ENCODE measurements at regions of chr11 and their contacts with region 1.

Region 1: DNA sequence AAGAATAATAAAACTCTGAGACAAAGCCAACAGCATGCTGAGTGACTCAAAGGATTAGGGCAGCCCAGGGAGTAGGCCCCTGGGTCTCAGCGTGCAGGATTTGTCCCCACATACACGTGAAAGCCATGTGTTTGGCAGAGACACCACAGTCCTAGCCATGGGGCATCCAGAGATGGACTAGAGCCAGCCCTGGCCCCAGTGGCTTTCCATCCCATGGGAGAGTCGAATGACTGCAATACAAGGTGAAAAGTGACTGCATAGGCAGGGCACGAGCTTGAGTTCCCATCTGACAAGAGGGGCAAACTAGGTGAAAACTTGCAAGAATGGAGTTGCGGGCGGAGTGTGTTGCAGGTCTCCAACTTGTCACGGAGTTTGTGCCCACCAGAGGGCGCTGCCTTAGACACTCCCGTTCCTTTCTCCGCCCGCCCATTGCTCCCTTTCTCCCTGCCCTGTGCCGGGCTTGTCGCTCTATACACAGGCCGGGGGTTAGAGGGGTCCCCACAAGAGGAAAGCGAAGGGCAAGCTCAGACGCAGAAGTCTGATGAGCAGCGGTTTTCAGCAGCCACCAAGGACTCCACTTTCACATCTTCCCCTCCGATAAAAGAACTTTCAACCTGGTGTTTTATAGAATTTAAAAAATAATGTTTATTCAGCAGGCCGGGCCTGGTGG is 24.2 kb downstream of the TSKU start:
- DNase-seq: peak; percentile 92
- ATAC-seq: peak; percentile 65 to 83

Region 2: DNA sequence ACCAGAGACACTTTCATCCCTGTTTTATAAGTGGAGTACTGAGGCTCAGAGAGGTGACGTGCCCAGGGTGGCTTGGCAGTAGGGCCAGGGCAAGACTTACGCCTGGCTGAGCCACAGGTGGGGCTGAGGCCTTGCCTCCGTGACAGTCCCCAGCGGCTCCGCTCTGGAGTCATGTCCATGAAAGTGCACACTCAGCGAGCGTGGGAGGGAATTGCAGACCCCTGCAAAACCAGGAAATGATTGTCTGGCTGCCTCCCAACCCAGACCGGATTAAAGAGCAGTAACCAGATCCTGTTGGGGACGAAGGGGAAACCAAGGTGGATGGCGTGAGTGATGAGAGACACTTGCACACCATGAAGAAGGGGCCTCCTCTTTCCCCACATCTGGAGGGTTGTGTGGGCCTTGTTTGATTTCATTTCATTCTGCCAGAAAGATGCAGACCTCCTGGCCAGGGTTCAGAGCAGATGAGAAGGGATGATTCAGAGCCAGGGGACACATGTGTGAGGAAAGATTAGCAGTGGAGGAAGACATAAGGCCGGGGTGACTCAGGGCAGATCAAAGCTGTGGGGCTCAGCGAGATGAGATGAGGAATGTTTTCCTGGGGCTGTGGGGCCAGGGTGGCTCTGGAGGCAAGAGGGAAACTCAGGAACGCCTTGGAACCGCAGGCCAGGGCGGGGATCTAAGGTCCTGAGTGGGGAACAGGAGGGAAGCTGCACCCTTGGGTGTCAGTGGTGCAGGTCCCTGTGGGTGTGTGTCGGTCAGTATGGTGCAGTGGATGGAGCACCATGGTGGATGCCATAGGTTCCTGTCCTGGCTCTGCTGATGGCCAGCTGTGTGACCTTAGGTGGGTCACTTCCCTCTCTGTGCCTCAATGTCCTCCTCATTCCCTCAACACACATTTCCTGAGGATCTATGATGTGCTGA is 106.9 kb before region 1 on chr11:
- intact Hi-C with region 1: no loop called
- DNase-seq: peak; percentile 34
- ATAC-seq: peak in 1 of 2 donors; percentile 38

Region 3: GRCh38 chr11:76860539-76861475 is 53.5 kb after region 1 on chr11 and contains the start of gene ACER3:
- intact Hi-C with region 1: loop called in 1 of 2 experiments (anchors 10 kb)
- DNase-seq: peak; percentile 95
- ATAC-seq: peak; percentile 99
- total RNA-seq, gene ACER3: 12.5 to 18.1 TPM

Region 4: GRCh38 chr11:76919887-76920746 is 112.8 kb after region 1 on chr11:
- intact Hi-C with region 1: loop called (anchors 1 to 5 kb)
- DNase-seq: peak; percentile 78
- ATAC-seq: peak; percentile 93 to 97

Region 5: DNA sequence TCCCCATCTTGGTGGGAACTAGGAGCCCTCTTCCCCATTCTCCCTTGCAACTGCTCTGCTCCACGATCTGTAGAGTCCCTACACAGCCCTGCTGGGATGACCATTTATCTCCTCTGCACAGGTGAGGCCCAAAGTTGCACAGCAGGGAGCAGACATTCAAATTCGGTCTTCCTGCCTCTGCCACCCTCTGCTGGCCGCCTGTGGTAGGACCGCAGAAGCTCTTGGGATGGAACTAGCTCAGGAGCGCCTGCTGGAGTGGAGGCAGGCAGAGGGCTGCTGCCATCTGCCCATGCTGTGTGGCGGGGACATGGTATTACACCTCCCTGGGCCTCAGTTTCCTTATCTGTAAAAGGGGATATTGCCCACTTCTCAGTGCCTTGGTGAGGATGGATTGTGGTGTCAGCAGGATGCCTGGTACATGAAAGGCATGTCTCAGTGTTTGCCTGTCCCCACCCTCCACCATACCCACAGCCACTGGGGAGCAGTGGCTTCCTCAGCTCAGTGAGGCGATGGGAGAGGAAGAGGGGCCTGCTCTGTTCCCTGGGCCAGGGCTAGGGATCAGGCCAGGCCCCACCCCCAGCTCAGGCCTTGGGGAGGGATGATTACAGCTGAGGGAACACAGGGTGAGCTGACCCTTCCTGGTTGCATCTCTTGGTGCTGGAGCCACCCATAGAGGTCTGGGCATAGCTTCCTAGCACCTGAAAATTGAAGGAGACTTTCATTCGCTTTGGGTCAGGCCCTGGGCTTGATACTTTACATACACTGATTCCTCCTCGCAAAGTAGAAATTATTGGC is 284.0 kb after region 1 on chr11:
- intact Hi-C with region 1: loop called in 1 of 2 experiments (anchors 5 kb)
- DNase-seq: peak; percentile 79
- ATAC-seq: peak; percentile 81 to 83

Region 6: DNA sequence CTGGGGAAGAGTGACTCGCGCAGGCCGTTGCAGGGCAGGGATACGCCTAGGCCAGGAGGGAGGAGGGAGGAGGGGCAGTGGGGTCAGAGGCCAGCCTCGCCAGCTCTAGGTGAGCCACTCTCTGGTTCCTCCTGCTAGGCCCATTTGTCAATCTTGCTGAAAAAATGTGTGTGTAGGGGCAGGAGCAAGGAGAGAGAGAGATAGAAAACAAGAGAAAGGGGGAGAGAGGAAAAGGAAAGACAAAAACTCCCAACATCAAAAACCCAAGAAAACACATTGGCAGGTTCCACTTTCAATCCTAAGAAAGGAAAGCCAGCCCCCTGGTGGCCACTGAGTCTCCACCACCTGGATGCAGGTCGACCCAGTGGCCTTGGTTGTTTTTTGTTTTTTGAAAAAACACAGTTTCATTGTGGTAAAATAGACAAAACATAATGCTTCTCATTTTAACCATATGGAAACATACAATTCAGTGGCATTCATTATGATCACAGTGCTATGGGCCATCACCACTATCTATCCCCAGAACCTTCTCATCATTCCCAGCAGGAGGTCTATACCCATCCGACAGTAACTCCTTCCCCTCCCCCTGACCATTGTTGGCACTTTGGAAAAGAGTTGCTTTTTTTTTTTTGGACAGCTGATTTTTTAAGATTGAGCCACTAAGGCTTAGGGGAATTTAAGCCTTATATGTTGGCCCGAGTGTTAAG is 306.2 kb after region 1 on chr11:
- intact Hi-C with region 1: loop called in 1 of 2 experiments (anchors 10 kb)
- DNase-seq: no peak
- ATAC-seq: no peak